ENCODE measurements at regions of chr11 and their contacts with region 1.

Region 1: DNA sequence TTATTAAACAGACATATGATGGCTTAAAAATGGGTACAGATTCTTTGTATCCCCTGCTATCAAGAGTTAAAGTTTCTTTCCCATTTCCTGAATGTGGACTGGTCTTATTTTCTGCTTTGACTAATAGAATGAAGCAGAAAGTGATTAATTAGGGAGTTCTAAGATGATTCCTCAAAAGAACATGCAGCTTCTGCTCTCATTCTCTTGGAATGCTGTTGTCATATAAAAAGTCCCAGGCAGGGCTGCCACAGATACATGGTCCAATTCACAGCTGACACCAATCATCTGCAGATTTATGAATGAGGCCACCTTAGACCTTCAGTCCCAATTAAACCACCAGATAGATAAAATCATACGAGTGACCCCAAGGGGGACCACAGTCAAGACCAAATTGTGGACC is 844.5 kb upstream of the RAG2 start:
- DNase-seq: peak; percentile 9
- H3K4me3 ChIP-seq: no peak overlapping the region
- H3K27ac ChIP-seq: no peak overlapping the region
- H3K4me1 ChIP-seq: no peaks in the 10 kb centered on the region
- H3K27me3 ChIP-seq: no peaks in the 10 kb centered on the region
- CTCF ChIP-seq: no peak

Region 2: DNA sequence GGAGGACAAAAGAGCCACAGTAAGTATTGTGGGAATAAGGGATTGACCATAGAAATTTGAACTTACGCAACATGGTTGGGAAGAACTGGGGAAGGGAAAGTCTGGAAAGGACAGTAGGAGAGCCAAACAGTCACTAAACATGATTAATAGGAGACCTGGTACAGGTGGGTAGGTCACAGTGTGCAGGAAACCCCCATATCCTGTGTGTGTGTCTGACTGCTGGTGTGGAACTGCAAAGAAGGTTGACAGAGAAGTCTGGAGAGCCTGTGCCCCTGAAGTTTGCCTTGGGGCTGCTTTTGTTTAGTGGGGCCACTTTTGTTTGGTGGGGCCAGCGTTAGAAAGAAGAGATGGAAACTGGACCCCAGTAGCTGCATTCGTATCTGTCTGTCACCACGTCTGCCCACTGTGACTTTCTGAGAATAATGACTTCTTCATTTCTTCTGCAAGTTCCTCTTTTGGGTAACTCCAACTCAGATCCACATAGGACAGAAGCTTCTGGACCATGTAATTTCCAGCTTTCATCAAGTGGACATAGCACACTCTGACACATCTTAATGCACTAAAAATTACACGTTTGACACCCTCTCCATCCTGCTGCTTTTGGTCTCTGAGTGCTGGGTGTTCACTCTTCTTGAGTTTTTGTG is 717.7 kb before region 1 on chr11:
- CTCF ChIA-PET with region 1: no interaction called
- dilution Hi-C with region 1: no loop called
- in situ Hi-C with region 1: no loop called
- intact Hi-C with region 1: no loop called
- DNase-seq: no peak
- H3K4me3 ChIP-seq: no peak overlapping the region
- H3K27ac ChIP-seq: no peak overlapping the region
- H3K4me1 ChIP-seq: no peaks in the 10 kb centered on the region
- H3K27me3 ChIP-seq: no peaks in the 10 kb centered on the region
- CTCF ChIP-seq: no peak

Region 3: DNA sequence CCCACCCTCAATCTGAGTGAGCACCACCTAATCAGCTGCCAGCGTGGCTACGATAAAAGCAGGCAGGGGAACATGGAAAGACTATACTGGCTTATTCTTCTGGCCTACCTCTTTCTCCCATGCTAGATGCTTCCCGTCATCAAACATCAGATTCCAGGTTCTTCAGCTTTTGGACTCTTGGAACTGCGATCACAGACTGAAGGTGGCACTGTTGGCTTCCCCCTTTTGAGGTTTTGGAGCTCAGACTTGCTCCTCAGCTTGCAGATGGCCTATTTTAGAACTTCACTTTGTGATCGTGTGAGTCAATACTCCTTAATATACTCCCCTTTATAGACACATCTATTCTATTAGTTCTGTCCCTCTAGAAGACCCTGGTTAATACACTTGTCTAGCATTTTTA is 300.9 kb before region 1 on chr11:
- CTCF ChIA-PET with region 1: no interaction called
- dilution Hi-C with region 1: no loop called
- in situ Hi-C with region 1: no loop called
- intact Hi-C with region 1: loop called (anchors 5 kb)
- DNase-seq: peak; percentile 4
- H3K4me3 ChIP-seq: no peak overlapping the region
- H3K27ac ChIP-seq: no peak overlapping the region
- H3K4me1 ChIP-seq: no peaks in the 10 kb centered on the region
- H3K27me3 ChIP-seq: no peaks in the 10 kb centered on the region
- CTCF ChIP-seq: peak; percentile 7 to 24

Region 4: DNA sequence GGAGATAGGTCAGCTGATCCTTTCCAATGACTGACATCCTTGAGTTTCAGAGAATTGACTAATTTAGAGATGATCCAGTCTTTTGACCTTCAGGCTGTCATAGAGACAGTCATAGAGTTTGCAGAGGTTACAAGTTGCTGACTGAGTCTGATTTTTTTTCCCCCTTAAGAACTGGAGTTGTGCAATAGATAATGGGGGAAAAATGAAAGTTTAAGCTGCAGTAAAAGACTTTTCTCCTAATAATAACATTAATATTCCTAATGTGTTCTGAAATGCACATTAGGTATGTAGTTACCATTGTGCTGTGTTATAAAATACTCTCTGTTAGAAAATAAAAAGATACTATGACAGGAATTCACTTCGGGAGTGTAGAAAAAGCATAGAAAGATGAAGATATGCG is 32.3 kb after region 1 on chr11:
- CTCF ChIA-PET with region 1: no interaction called
- dilution Hi-C with region 1: no loop called
- in situ Hi-C with region 1: no loop called
- intact Hi-C with region 1: no loop called
- DNase-seq: no peak
- H3K4me3 ChIP-seq: peak overlapping the region in 1 of 3 experiments; percentile 17
- H3K27ac ChIP-seq: no peak overlapping the region
- H3K4me1 ChIP-seq: no peaks in the 10 kb centered on the region
- H3K27me3 ChIP-seq: no peaks in the 10 kb centered on the region
- CTCF ChIP-seq: no peak

Measured in mammary epithelial cell (primary cell).